KBM-7 (cell line): ENCODE measurements at regions of chr12 and their contacts with region 1.

Region 1: GRCh38 chr12:46342562-46343033 is 30.0 kb downstream of the SLC38A2 start:
- DNase-seq: peak; percentile 72

Region 2: DNA sequence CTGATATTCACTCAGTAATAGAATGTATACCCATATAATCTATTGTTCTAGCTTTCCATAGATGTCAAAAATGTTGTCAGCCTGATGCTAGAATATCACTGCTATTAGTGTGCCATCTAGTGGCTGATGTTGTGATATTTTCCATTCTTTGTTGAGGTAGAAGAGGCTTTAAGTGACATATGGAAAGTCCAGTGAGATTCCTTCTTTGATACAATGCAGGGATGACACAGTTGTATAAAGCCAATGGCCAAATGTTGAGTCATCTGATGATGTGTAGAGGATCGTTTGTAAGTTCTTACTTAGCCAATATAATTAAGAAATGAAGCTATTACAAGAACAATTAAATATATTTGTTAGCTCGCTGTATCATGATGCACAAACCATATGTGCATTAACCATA is 678.7 kb after region 1 on chr12:
- in situ Hi-C with region 1: loop called (anchors 25 kb)
- DNase-seq: peak; percentile 77